ENCODE measurements at regions of chr15 and their contacts with region 1.

Region 1: GRCh38 chr15:33737687-33738601 is 230.4 kb upstream of the CHRM5 start:
- DNase-seq: no peak
- H3K4me3 ChIP-seq: no peak overlapping the region
- H3K27me3 ChIP-seq: peaks cover 8% of the 10 kb centered on the region
- CTCF ChIP-seq: peak; percentile 86

Region 2: GRCh38 chr15:33292717-33293307 is 445.1 kb before region 1 on chr15:
- CTCF ChIA-PET with region 1: interaction called, 14 read pairs
- POLR2A ChIA-PET with region 1: no interaction called
- DNase-seq: no peak
- H3K4me3 ChIP-seq: no peak overlapping the region
- H3K27me3 ChIP-seq: peaks cover 8% of the 10 kb centered on the region; the same call in 1 of the 2 replicates
- CTCF ChIP-seq: peak; percentile 69

Region 3: GRCh38 chr15:33722005-33722672 is 15.8 kb before region 1 on chr15:
- CTCF ChIA-PET with region 1: interaction called, 86 read pairs
- POLR2A ChIA-PET with region 1: no interaction called
- DNase-seq: peak; percentile 31
- H3K4me3 ChIP-seq: no peak overlapping the region
- H3K27me3 ChIP-seq: no peaks in the 10 kb centered on the region
- CTCF ChIP-seq: no peak

Region 4: GRCh38 chr15:33994005-33994615 is 256.2 kb after region 1 on chr15:
- CTCF ChIA-PET with region 1: interaction called, 41 read pairs
- POLR2A ChIA-PET with region 1: no interaction called
- DNase-seq: no peak
- H3K4me3 ChIP-seq: no peak overlapping the region
- H3K27me3 ChIP-seq: no peaks in the 10 kb centered on the region
- CTCF ChIP-seq: peak; percentile 56